PC-9 (cell line): ENCODE measurements at regions of chrX and their contacts with region 1.

Region 1: DNA sequence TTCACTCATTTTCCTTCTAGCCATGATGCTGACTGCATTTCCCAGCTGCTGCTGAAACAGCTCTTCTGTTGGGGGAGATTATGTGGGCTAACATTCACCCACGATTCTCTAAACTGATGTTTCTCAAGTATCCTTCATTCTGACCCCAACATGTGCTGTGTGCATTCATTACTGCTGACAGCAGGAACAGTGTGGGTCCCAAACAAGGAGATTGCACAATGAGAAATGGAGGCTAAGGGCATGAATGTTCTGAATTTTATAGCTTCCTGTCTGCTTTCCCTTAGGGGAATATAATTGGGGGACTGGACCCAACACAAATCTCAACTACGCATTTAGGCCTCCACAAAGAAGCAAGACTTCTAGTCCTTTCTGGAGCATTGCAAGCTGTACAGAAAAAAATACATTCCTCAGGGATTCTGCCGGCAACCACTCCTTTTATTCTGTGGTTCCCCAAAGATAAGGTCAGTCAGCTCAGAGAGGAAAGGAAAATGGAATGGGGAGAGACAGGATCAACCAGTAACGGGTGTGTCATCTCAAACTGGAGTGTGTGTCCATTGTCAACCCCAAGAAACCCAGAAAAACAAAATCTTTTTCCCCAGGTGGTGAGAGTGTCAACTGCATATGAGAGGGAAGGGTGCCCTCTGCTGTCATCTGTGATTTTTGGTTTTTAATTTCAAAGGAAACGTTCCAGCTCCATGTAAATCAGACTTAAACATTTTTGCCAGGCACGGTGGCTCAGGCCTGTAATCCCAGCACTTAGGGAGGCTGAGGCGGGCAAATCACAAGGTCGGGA is 81.5 kb upstream of the EGFL6 start:
- DNase-seq: peak; percentile 60 to 95
- H3K4me3 ChIP-seq: no peak overlapping the region; the same call in 1 of the 2 replicates
- H3K27ac ChIP-seq: peak overlapping the region; percentile 99
- H3K4me1 ChIP-seq: peaks cover 38% of the 10 kb centered on the region
- H3K27me3 ChIP-seq: no peaks in the 10 kb centered on the region
- CTCF ChIP-seq: peak; percentile 78

Region 2: GRCh38 chrX:12946838-12947544 is 540.9 kb before region 1 on chrX:
- CTCF ChIA-PET with region 1: interaction called, 20 read pairs
- POLR2A ChIA-PET with region 1: interaction called, 6 read pairs
- intact Hi-C with region 1: no loop called
- DNase-seq: peak; percentile 87 to 94
- H3K4me3 ChIP-seq: peak overlapping the region; percentile 40; the same call in 1 of the 2 replicates
- H3K27ac ChIP-seq: peak overlapping the region; percentile 98
- H3K4me1 ChIP-seq: peaks cover 35% of the 10 kb centered on the region
- H3K27me3 ChIP-seq: no peaks in the 10 kb centered on the region
- CTCF ChIP-seq: peak; percentile 93

Region 3: GRCh38 chrX:13080128-13080795 is 407.7 kb before region 1 on chrX:
- CTCF ChIA-PET with region 1: no interaction called
- POLR2A ChIA-PET with region 1: interaction called, 32 read pairs
- intact Hi-C with region 1: no loop called
- DNase-seq: no peak
- H3K4me3 ChIP-seq: no peak overlapping the region
- H3K27ac ChIP-seq: no peak overlapping the region
- H3K4me1 ChIP-seq: no peaks in the 10 kb centered on the region
- H3K27me3 ChIP-seq: no peaks in the 10 kb centered on the region
- CTCF ChIP-seq: no peak

Region 4: GRCh38 chrX:13223868-13224555 is 263.9 kb before region 1 on chrX:
- CTCF ChIA-PET with region 1: no interaction called
- POLR2A ChIA-PET with region 1: interaction called, 14 read pairs
- intact Hi-C with region 1: loop called (anchors 1 kb)
- DNase-seq: peak; percentile 49 to 89
- H3K4me3 ChIP-seq: no peak overlapping the region
- H3K27ac ChIP-seq: peak overlapping the region; percentile 86
- H3K4me1 ChIP-seq: peaks cover 20% of the 10 kb centered on the region
- H3K27me3 ChIP-seq: no peaks in the 10 kb centered on the region
- CTCF ChIP-seq: no peak

Region 5: DNA sequence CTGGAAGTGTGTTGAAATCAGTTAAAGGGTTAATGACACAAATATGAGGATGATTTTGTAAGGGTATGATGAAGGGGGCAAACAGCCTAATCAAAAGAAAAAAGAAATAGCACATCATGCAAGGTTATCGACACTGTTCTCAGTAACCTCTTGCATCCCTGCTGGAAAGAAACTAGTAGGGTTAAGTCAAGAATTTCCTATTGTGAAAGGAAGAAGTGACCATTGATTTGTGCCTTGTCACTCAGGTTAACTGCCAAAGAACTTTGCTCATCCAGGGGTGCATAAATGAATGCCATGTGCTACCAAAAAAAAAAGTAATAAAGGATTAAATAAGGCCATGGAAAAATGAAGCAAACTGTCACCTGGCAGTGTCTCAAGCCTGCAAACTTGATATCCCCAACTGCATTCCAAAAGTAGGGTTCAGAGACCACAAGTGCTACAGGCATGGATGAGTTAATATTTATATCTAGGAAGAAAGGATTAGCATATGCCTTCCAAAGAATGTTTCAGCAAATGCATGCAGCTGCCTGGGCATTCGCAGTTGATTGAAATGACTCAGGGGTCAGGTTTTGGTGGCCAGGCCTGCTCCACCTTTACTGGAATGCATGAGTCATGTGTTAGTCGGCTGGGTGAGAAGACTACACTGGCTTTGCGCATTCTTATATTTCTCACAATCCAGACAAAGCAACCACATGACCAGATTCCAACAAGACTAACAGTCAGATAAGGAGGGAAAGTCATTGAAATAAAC is 89.7 kb before region 1 on chrX:
- CTCF ChIA-PET with region 1: interaction called, 3 read pairs
- POLR2A ChIA-PET with region 1: interaction called, 3 read pairs
- intact Hi-C with region 1: loop called (anchors 1 kb)
- DNase-seq: peak; percentile 84 to 98
- H3K4me3 ChIP-seq: no peak overlapping the region
- H3K27ac ChIP-seq: peak overlapping the region; percentile 99
- H3K4me1 ChIP-seq: peaks cover 39% of the 10 kb centered on the region
- H3K27me3 ChIP-seq: no peaks in the 10 kb centered on the region
- CTCF ChIP-seq: no peak

Region 6: DNA sequence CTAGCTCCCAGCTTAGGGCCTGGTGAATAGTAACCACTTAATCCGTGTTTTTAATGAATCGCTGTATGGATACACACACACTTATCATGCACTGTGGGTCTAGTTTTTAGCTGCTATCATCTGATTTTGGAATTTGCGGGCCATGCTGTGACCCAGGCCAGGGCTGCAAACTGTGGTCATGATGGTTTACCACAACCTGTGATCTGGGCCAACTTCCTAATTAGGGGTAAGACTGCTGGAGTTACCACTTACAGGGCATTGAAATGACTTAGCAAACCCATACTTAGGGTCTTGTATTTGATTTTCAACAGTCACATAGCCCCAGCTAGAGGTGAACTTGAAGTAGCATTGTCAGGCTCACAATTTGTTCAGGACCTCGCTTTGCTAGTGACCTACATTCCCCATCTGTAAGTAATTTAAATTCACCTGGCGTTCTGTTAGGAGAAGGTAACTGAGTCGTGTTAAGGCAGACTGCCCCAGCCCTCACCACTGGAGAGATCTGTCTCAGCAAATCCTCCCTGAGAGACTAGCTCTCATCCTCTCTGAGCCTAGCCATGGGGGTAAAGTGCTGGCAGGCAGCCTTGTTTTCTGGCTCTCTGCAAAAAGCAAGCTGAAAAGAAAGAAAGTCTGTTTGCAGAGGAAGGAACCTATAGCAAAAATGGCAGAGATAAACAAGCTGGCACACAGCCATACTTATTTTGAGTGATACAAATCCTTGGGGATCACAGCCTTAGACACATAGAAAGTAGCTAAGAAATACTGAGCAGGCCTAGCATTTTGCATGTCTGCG is 47.6 kb after region 1 on chrX:
- CTCF ChIA-PET with region 1: no interaction called
- POLR2A ChIA-PET with region 1: no interaction called
- intact Hi-C with region 1: no loop called
- DNase-seq: no peak
- H3K4me3 ChIP-seq: no peak overlapping the region
- H3K27ac ChIP-seq: no peak overlapping the region
- H3K4me1 ChIP-seq: no peaks in the 10 kb centered on the region
- H3K27me3 ChIP-seq: no peaks in the 10 kb centered on the region
- CTCF ChIP-seq: no peak

Region 7: GRCh38 chrX:13761606-13762414 is 273.9 kb after region 1 on chrX:
- CTCF ChIA-PET with region 1: no interaction called
- POLR2A ChIA-PET with region 1: no interaction called
- intact Hi-C with region 1: no loop called
- DNase-seq: no peak
- H3K4me3 ChIP-seq: no peak overlapping the region
- H3K27ac ChIP-seq: no peak overlapping the region
- H3K4me1 ChIP-seq: no peaks in the 10 kb centered on the region
- H3K27me3 ChIP-seq: no peaks in the 10 kb centered on the region
- CTCF ChIP-seq: no peak

Region 8: GRCh38 chrX:14386981-14387380 is 899.1 kb after region 1 on chrX:
- CTCF ChIA-PET with region 1: no interaction called
- POLR2A ChIA-PET with region 1: no interaction called
- intact Hi-C with region 1: no loop called
- DNase-seq: no peak
- H3K4me3 ChIP-seq: no peak overlapping the region
- H3K27ac ChIP-seq: no peak overlapping the region
- H3K4me1 ChIP-seq: no peaks in the 10 kb centered on the region
- H3K27me3 ChIP-seq: no peaks in the 10 kb centered on the region
- CTCF ChIP-seq: no peak